AG04450 (cell line): ENCODE measurements at regions of chr15 and their contacts with region 1.

Region 1: GRCh38 chr15:83413054-83413719 is 34.0 kb upstream of the SH3GL3 start:
- DNase-seq: no peak
- H3K4me3 ChIP-seq: no peak overlapping the region
- H3K27ac ChIP-seq: no peak overlapping the region
- H3K27me3 ChIP-seq: no peaks in the 10 kb centered on the region
- CTCF ChIP-seq: no peak

Region 2: DNA sequence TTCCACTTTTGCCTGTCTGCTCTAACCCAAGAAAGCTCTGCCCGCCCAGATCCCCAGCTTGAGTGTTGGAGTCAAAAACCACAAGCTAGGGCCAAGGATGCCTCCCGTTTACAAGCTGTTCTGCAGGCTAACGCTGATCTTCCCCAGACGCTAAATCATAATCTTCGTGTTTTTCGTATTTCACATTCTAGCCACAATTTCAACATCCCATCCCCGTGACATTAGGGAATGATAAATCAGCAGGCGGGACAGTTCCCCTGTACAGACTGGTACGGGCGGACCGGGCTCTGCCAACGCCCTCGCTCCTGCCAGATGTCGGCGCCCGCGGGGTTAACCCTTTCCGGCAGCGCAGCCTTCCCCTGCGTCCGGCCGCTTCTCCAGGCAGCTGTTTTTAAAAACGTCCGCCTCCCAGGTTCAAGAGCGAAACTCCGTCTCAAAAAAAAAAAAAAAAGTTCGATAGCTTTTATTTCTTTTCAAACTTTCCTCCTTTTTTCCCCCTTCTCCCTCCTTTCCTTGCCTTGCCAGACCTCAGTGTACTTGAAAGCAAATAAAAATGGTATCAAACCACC is 47.7 kb before region 1 on chr15:
- CTCF ChIA-PET with region 1: no interaction called
- POLR2A ChIA-PET with region 1: no interaction called
- DNase-seq: no peak
- H3K4me3 ChIP-seq: peak overlapping the region; percentile 46
- H3K27ac ChIP-seq: no peak overlapping the region
- H3K27me3 ChIP-seq: peaks cover 34% of the 10 kb centered on the region
- CTCF ChIP-seq: no peak

Region 3: GRCh38 chr15:83436458-83437158 is 23.4 kb after region 1 on chr15:
- CTCF ChIA-PET with region 1: interaction called, 10 read pairs
- POLR2A ChIA-PET with region 1: no interaction called
- DNase-seq: no peak
- H3K4me3 ChIP-seq: no peak overlapping the region
- H3K27ac ChIP-seq: no peak overlapping the region
- H3K27me3 ChIP-seq: no peaks in the 10 kb centered on the region
- CTCF ChIP-seq: peak; percentile 67